Gastrocnemius medialis (tissue), 4 donors: ENCODE measurements at regions of chr2 and their contacts with region 1.

Region 1: GRCh38 chr2:231297108-231297908 is 98.2 kb upstream of the B3GNT7 start:
- DNase-seq: peak in 1 of 2 donors; percentile 18
- ATAC-seq: no peak
- H3K4me3 ChIP-seq: no peak overlapping the region
- H3K27ac ChIP-seq: no peak overlapping the region
- H3K4me1 ChIP-seq: no peaks in the 10 kb centered on the region
- H3K27me3 ChIP-seq: no peaks in the 10 kb centered on the region
- CTCF ChIP-seq: peak in 3 of 5 experiments; percentile 30 to 37 (median 34)
- POLR2A ChIP-seq: no peak

Region 2: DNA sequence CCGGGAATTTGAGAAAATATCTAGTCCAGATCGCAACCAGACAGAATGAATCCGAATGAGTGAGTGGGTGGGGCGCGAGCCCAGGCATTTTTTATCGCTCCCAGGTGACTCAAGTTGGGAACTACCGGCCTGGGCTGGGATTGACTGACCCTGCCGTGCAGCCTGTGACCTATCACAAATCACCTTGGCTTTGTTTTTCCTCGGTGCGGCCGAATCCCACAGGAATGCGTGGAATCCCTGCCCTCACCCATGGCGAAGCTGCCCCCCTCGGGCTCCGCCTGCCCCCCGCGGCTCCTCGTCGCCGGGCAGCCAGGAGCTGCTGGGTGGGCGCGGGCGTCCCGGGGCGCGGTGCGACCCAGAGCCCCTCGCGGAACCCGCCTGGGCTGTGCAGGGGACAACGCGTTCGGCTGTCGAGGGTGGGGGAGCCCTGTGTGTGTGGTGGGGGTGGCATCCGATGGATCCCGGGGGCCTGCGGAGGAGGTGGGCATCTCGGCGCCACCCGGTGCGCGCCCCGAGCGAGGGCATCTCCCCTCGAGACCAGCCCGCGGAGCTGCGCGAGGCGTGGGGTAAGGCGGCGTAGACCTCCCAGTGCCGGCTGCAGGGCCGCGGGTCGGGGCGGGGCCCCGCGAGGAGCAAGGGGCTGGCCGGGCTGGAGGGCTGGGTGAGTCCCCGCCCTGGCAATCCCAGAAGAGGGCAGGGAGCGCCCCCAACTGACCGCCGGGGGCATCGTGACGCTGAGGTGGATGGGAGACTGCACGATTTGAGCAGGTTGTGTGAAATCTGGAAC is 114.7 kb after region 1 on chr2:
- in situ Hi-C with region 1: no loop called
- intact Hi-C with region 1: loop called (anchors 10 kb)
- DNase-seq: peak; percentile 45 to 53
- ATAC-seq: peak; percentile 61 to 76
- H3K4me3 ChIP-seq: peak overlapping the region; percentile 47 to 58 (median 50)
- H3K27ac ChIP-seq: no peak overlapping the region
- H3K4me1 ChIP-seq: peaks cover 0 to 5% of the 10 kb centered on the region in 2 donors
- H3K27me3 ChIP-seq: peaks cover 0 to 7% (median 0%) of the 10 kb centered on the region in 3 donors
- CTCF ChIP-seq: peak in 4 of 5 experiments; percentile 40 to 66 (median 64)
- POLR2A ChIP-seq: no peak